Endothelial cell of umbilical vein (primary cell): ENCODE measurements at regions of chr6 and their contacts with region 1.

Region 1: DNA sequence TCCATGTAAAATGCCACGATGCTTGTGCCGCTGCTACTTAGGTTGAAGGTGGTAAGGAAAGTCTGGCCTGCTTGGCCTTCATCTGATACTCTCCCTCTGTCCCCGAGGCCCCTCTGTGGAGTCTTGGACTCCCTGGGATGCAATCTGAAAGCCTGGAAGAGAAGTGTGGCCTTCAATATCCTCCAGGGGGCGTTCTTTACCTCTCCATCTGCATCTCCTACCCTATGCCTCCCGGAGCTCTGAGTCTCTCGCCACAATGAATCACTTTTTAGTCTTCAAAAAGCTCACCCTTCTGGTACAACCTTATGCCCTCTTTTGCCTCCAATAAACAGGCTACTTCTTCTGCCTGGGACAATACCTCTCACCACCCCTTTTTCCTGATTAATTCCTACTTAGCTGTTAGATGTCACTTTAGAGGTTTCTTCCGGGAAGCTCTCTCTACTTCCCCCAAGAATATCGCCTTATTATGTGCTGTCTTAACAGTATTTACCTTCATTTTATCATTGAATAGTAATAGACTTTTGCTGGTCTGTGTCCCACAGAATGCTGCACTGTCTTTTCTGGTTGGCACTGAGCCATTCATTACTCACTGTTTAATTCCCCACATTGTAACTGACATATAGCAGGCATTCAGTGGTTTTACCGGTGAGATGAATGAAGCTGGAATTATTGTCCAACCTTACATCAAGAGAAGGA is 13.9 kb upstream of the ATG5 start:
- DNase-seq: peak; percentile 57
- H3K4me3 ChIP-seq: no peak overlapping the region
- H3K27ac ChIP-seq: no peak overlapping the region
- H3K4me1 ChIP-seq: no peaks in the 10 kb centered on the region
- H3K27me3 ChIP-seq: peaks cover 15 to 24% of the 10 kb centered on the region in 2 experiments
- CTCF ChIP-seq: peak; percentile 81 to 85
- POLR2A ChIP-seq: no peak

Region 2: GRCh38 chr6:105786890-105787655 is 552.4 kb before region 1 on chr6:
- CTCF ChIA-PET with region 1: no interaction called
- POLR2A ChIA-PET with region 1: no interaction called
- dilution Hi-C with region 1: no loop called
- intact Hi-C with region 1: no loop called
- DNase-seq: no peak
- H3K4me3 ChIP-seq: no peak overlapping the region
- H3K27ac ChIP-seq: no peak overlapping the region
- H3K4me1 ChIP-seq: no peaks in the 10 kb centered on the region
- H3K27me3 ChIP-seq: peaks cover 0 to 3% of the 10 kb centered on the region in 2 experiments
- CTCF ChIP-seq: no peak
- POLR2A ChIP-seq: no peak

Region 3: GRCh38 chr6:106315765-106316374 is 23.6 kb before region 1 on chr6:
- CTCF ChIA-PET with region 1: no interaction called
- POLR2A ChIA-PET with region 1: no interaction called
- dilution Hi-C with region 1: no loop called
- intact Hi-C with region 1: no loop called
- DNase-seq: peak; percentile 23
- H3K4me3 ChIP-seq: no peak overlapping the region
- H3K27ac ChIP-seq: no peak overlapping the region
- H3K4me1 ChIP-seq: peaks cover 7% of the 10 kb centered on the region
- H3K27me3 ChIP-seq: no peaks in the 10 kb centered on the region
- CTCF ChIP-seq: no peak
- POLR2A ChIP-seq: no peak

Region 4: DNA sequence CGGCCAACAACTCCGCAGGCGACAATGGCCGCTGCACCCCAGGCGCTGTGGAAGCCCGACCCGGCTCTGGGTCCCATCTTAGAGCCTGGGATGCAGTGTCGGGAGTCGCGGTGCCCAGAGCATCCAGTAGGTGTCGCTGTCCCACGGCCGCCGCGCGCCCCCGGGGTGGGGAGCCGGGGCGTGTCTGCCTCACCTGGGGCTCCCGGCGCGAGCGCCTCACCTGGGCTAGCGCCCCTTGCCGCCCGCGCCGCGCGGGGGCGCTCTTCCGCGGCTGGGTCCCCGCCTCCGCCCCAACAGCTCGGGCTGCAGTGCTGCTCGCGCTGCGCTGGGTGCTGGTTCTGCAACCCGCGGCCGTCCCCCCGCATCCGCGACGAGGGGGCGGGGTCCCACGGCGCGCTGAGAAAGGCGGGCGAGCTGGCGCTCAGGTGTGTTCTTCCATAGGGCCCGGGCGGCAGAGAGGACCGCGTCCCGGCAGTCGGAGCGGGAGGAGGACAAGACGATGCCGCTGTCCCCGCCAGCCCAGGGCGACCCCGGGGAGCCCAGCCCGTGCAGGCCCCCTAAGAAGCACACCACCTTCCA is 21.0 kb after region 1 on chr6 and contains the start of gene CRYBG1:
- CTCF ChIA-PET with region 1: interaction called, 21 read pairs
- POLR2A ChIA-PET with region 1: no interaction called
- dilution Hi-C with region 1: no loop called
- intact Hi-C with region 1: loop called (anchors 2 kb)
- DNase-seq: peak; percentile 23
- H3K4me3 ChIP-seq: peak within 1 kb of the TSS; percentile 2 to 22 (median 17)
- H3K27ac ChIP-seq: no peak within 1 kb of the TSS
- H3K4me1 ChIP-seq: peaks cover 7% of the 10 kb centered on the region
- H3K27me3 ChIP-seq: peaks cover 14 to 23% of the 10 kb centered on the region in 2 experiments
- CTCF ChIP-seq: peak; percentile 83 to 88
- POLR2A ChIP-seq: no peak
- total RNA-seq, gene CRYBG1: 25.0 and 30.1 TPM in 2 replicates

Region 5: GRCh38 chr6:106444777-106445507 is 105.5 kb after region 1 on chr6:
- CTCF ChIA-PET with region 1: interaction called, 23 read pairs
- POLR2A ChIA-PET with region 1: no interaction called
- dilution Hi-C with region 1: no loop called
- intact Hi-C with region 1: loop called (anchors 1 kb)
- DNase-seq: peak; percentile 52
- H3K4me3 ChIP-seq: no peak overlapping the region
- H3K27ac ChIP-seq: no peak overlapping the region
- H3K4me1 ChIP-seq: no peaks in the 10 kb centered on the region
- H3K27me3 ChIP-seq: peaks cover 14 to 29% of the 10 kb centered on the region in 2 experiments
- CTCF ChIP-seq: peak; percentile 61 to 68
- POLR2A ChIP-seq: no peak

Region 6: DNA sequence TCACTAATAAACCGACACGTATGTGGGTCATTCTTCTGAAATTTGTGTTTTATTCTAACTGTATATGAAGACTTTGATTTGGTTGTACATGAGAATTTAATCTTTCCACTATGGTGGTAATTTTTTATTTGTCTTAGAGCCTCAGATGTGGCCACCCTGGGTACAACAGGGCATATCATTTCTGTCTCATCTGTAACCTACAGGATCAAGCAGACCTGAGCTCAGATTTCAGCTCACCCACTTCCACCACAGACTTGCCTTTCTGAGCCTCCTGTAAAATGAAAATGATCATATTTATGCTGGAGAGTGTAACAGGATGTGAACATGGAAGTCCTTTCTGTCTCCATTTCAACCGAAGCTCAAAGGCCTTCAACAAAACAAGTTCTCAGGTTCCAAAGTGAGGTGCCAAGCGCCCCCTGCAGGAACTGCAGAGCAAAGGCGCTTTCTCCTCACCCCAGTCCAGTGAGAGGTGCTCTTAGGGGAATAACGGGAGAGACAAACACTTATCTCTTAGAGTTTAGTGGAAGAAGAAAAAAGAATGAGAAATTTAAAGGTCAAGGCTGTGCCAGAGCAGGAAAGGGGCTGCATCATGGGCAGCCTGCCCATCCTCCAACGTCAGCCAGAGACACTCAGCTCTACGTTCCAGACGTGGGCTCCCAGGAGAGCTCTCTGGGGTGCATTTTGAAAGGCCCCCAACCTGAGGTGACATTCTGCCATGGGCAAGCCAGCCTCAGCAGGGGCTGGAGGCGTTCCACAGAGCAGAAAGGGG is 658.1 kb after region 1 on chr6:
- CTCF ChIA-PET with region 1: interaction called, 43 read pairs
- POLR2A ChIA-PET with region 1: no interaction called
- dilution Hi-C with region 1: no loop called
- intact Hi-C with region 1: no loop called
- DNase-seq: peak; percentile 47
- H3K4me3 ChIP-seq: no peak overlapping the region
- H3K27ac ChIP-seq: no peak overlapping the region
- H3K4me1 ChIP-seq: no peaks in the 10 kb centered on the region
- H3K27me3 ChIP-seq: no peaks in the 10 kb centered on the region
- CTCF ChIP-seq: peak; percentile 85 to 88
- POLR2A ChIP-seq: no peak